A673 (cell line): ENCODE measurements at regions of chr14 and their contacts with region 1.

Region 1: DNA sequence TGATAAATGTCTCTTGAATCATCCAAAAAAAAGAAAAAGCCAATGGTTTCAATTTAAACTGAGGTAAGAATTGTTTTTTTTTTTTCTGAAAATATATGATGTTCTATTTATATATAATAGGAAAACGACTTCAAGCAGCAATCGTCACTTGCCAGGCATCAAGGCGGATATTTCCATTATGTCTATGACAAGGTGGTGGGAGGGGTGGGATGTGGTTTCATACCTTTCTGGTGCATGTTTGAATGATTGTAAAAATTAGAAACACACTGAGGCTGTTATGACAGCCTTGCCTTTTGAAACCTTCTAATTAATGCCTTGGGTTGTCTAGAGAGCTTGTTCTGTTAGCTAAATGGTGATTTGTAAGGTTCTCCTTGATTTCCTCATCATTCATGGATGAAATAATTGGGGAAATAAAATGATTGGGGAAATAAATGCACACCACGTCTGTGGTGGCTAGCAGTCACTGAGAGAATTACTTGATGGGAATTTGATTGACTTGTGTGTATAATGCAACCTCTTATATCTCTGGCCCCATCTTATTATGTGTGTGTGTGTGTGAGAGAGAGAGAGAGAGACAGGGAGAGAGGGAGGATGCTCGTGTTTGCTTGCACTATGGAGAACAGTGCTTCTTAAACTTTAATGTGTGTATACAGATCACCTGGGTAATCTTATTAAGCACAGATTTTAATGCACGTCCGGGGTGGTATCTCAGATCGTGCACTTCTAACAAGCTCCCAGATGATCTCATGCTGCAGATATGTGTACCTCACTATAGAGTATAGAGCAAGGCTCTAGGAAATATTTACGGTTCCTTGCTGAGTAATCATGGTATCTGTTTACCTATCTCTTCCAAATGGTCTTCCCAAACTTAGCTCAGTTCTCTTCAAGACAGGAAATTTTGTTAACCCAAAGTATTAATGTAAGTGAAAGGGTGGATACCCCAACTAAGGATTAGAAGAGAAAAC is 502.6 kb downstream of the DIO2 start:
- DNase-seq: no peak
- H3K4me3 ChIP-seq: no peak overlapping the region
- H3K27ac ChIP-seq: no peak overlapping the region
- H3K4me1 ChIP-seq: no peaks in the 10 kb centered on the region
- H3K27me3 ChIP-seq: no peaks in the 10 kb centered on the region
- CTCF ChIP-seq: no peak

Region 2: GRCh38 chr14:79825046-79825521 is 116.4 kb after region 1 on chr14:
- CTCF ChIA-PET with region 1: no interaction called
- POLR2A ChIA-PET with region 1: interaction called, 16 read pairs
- intact Hi-C with region 1: no loop called
- DNase-seq: peak; percentile 59
- H3K4me3 ChIP-seq: no peak overlapping the region
- H3K27ac ChIP-seq: no peak overlapping the region
- H3K4me1 ChIP-seq: peaks cover 26% of the 10 kb centered on the region
- H3K27me3 ChIP-seq: no peaks in the 10 kb centered on the region
- CTCF ChIP-seq: no peak